ENCODE measurements at regions of chr17 and their contacts with region 1.

Region 1: DNA sequence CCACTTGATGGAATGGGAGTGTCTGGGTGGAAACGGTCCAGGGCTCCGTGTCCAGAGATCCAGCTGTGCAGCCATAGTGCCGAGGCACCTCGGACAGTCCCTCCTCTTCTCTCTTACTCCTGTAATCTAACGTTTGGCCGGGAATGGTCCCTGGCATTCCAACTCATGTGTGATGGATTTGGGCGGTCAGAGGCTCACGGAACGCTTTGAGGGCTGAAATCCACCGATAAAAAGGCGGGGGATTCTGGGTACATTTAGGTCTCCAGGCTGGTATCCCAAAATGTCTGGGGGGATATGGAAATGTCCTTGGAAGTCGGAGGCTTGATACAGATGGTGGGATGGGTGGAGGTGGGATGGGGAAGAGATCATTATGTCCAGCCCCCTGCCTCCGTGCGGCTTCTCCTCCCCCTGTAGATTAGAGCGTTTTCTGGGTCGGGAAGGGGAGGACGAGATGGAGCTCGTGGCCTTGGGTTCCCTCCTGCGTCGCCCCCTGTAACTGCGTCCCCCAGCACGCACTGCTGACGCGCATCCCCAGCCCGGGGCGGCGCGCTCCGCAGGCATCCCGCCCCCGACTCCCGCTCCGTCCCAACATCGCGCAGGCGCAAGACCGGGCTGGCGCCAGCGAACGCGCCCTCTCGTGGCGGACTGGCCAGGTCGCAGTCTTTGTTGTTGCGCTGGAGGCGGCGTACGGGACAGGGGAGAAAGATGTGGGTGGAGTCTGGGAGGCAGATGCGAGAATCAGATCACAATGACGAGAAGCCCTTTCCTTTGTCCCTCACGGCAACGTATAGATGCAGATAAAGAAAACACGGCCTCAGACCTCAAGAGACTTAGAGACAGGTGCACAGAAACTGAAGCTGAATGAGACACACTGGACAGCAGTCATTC is 4.5 kb upstream of the SGCA start:
- DNase-seq: peak; percentile 93
- H3K4me3 ChIP-seq: peak overlapping the region; percentile 68
- H3K27ac ChIP-seq: no peak overlapping the region
- H3K4me1 ChIP-seq: peaks cover 23% of the 10 kb centered on the region
- CTCF ChIP-seq: peak; percentile 89

Region 2: GRCh38 chr17:50114849-50115357 is 46.4 kb before region 1 on chr17:
- CTCF ChIA-PET with region 1: no interaction called
- POLR2A ChIA-PET with region 1: no interaction called
- intact Hi-C with region 1: loop called (anchors 1 kb)
- DNase-seq: peak; percentile 80
- H3K4me3 ChIP-seq: no peak overlapping the region
- H3K27ac ChIP-seq: no peak overlapping the region
- H3K4me1 ChIP-seq: no peaks in the 10 kb centered on the region
- CTCF ChIP-seq: peak; percentile 89

Measured in OCI-LY7 (cell line).